Mammary epithelial cell (primary cell): ENCODE measurements at regions of chr3 and their contacts with region 1.

Region 1: DNA sequence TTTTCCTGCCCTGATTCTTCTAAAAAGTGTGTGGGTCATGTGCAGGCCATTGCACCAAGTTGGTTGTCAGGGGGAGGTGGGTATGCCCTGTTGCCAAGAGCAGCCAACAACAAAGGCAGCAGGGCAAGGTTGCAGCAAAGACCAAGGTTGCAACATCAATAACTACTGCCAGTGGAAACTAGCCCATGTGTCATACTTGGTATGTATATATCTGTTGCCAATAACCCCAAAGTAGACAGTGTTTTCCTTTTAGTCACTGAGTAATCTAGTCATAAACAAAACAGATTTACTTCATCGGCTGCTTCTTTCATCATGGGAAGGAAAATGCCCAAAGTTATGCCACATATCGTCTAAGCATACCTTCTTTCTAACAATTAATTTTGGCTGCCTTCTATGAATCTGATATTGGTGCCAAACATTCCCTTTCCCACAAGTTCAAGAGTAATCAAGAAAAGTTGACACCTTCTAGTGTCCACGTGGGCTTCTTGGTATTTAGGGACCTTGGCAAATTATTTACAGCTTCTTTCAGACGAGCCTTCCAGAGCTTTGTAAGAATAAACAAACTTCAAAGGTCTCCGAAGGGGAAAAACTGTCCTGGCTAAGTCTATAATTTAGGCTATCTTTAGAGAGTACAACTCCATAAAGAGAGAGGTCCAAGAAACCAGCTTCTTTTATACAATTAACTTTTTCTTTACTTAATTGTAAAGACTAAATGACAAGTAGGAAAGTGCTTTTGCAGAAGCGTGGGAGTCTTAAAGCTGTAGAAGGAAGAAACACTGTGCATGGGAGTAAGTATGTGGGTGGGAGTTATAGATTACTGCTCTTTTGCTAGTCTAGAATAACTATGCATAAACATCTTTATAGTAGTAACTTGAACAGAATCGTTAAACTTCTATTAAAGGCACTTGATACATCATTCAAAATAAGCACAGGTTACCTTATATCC is 10.0 kb upstream of the MBNL1 start:
- DNase-seq: peak; percentile 98
- H3K4me3 ChIP-seq: no peak overlapping the region
- H3K27ac ChIP-seq: peak overlapping the region; percentile 76
- H3K4me1 ChIP-seq: peaks cover 14% of the 10 kb centered on the region
- H3K27me3 ChIP-seq: no peaks in the 10 kb centered on the region
- CTCF ChIP-seq: no peak

Region 2: DNA sequence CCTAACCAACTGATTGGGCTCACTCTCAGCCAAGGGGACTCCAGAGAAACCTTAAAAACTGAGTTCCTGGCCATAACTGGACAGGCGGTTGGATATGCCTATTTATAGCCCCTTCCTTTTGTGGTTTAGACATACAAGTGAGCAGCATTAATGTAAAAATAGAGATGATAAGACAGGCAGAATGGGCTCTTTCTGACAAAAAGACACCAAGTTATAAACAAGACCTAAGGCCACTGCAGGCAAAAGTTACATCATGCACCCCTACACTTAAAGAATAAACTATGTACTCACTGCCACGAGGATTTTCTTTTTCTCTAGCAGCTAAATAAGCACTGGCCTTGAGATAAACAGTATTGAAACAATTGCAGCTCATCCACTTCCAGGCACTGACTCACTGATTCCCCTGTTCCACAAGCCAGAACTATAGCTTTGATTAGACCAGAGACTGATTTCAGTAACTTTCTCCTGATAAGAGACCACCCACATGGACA is 355.2 kb before region 1 on chr3:
- CTCF ChIA-PET with region 1: no interaction called
- dilution Hi-C with region 1: no loop called
- in situ Hi-C with region 1: no loop called
- intact Hi-C with region 1: no loop called
- DNase-seq: no peak
- H3K4me3 ChIP-seq: no peak overlapping the region
- H3K27ac ChIP-seq: no peak overlapping the region
- H3K4me1 ChIP-seq: no peaks in the 10 kb centered on the region
- H3K27me3 ChIP-seq: no peaks in the 10 kb centered on the region
- CTCF ChIP-seq: no peak

Region 3: DNA sequence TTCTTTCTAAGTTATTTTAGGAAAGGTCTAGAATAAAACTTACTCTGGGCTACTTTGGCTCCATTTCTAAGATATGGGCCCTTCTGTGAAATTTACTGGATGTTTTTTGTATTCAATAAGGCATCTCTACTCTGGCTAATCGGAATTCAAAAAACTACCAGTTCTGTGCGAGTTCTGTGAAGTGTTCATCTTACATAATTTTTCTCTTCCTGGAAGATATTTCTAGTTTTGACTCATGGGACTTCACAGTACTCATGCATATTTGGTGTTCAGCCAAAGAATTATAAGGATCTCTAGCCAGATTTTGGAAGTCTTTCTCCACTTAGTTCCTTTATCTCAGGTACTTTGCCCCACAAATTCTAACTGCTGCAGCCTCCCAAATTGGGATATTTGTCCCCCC is 36.4 kb before region 1 on chr3:
- CTCF ChIA-PET with region 1: no interaction called
- dilution Hi-C with region 1: no loop called
- in situ Hi-C with region 1: no loop called
- intact Hi-C with region 1: loop called (anchors 5 kb)
- DNase-seq: peak; percentile 38
- H3K4me3 ChIP-seq: no peak overlapping the region
- H3K27ac ChIP-seq: no peak overlapping the region
- H3K4me1 ChIP-seq: peaks cover 5% of the 10 kb centered on the region
- H3K27me3 ChIP-seq: no peaks in the 10 kb centered on the region
- CTCF ChIP-seq: no peak